ENCODE measurements at regions of chr3 and their contacts with region 1.

Region 1: DNA sequence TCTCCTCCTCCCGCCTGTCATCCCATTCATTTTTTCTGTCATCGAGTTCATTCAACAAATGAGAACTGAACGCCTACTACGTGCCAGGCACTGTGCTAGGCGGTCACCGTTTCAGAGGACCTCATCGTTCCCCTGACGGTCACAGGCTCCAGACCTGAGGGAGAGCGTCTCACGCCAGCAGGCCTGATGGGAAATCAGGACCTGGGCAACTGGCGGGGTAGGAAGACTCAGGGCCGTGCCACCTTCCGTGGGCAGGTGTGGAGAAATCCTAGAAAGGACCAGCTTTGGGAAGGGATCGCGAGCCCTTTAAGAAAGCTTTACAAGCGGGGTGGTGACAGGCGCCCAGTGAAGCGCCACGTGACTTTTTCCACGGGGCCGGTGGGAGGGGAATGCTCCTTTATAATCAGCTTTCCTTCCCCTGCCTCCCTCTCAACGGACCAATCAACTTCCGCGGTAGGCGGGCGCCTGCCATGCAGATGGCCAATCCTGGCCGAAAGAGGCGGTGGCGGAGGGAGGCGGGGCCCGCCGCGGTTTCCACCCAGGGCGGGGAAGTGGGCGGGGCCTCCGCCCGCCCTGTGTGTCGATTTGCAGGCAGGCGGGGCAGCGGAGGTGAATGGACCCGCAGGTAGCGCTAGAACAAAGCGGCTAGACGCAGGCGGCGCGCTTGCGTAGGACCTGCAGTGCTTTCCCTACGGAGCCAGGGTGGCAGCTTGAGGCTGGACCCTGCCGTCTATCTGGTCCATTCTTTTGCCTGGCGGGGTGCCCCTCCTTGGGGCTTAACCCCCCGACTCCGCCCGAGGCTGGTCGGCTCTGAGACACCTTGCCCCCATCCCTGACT is 816 bp upstream of the DUSP7 start:
- DNase-seq: peak; percentile 100
- H3K4me3 ChIP-seq: peak overlapping the region; percentile 66 to 88 (median 80)
- H3K27ac ChIP-seq: peak overlapping the region; percentile 88 to 92 (median 91)
- H3K4me1 ChIP-seq: peaks cover 36 to 51% (median 51%) of the 10 kb centered on the region in 4 donors
- H3K27me3 ChIP-seq: no peaks in the 10 kb centered on the region
- CTCF ChIP-seq: peak in 2 of 3 experiments; percentile 13 to 23
- EP300 ChIP-seq: no peak
- POLR2A ChIP-seq: no peak

Region 2: GRCh38 chr3:51434746-51435327 is 622.4 kb before region 1 on chr3:
- intact Hi-C with region 1: no loop called
- DNase-seq: no peak
- H3K4me3 ChIP-seq: no peak overlapping the region
- H3K27ac ChIP-seq: no peak overlapping the region
- H3K4me1 ChIP-seq: no peaks in the 10 kb centered on the region
- H3K27me3 ChIP-seq: no peaks in the 10 kb centered on the region
- CTCF ChIP-seq: peak; percentile 43 to 69 (median 60)
- EP300 ChIP-seq: no peak
- POLR2A ChIP-seq: no peak

Region 3: DNA sequence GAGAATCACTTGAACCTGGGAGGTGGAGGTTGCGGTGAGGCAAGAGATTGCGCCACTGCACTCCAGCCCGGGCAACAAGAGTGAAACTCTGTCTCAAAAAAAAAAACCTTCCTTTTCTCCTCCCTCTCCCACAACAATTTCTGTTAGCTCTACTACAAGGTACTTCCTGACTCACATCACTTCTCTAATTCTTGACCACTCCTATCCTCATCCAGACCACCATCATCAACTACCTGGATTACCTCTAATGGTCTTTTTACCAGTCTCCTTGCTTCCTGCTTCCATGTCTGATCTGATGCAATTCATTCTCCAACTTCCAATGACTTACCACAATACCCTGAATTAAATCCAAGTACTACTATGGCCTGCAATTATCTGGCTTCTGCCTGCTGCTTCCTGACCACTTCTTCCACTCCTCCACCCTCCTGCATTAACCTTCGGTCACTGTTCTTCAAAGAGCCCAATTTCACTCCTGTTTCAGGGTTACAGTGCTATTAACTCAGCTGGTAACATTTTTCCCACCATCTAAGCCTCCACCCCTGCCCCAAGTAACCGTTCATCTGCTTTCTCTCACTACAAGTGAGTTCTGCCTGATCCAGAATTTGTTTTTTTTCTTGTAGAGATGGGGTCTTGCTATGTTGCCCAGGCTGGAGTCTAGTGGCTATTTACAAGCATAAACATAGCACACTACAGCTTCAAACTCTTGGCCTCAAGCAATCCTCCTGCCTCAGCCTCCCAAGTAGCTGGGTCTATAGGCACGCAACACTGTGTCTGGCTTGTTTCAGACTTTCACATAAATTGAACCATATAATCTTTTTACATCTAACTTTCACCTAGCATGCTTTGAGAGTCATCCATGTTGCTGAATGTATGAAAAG is 585.2 kb before region 1 on chr3:
- intact Hi-C with region 1: no loop called
- DNase-seq: no peak
- H3K4me3 ChIP-seq: no peak overlapping the region
- H3K27ac ChIP-seq: no peak overlapping the region
- H3K4me1 ChIP-seq: no peaks in the 10 kb centered on the region
- H3K27me3 ChIP-seq: no peaks in the 10 kb centered on the region
- CTCF ChIP-seq: no peak
- EP300 ChIP-seq: no peak
- POLR2A ChIP-seq: no peak

Region 4: DNA sequence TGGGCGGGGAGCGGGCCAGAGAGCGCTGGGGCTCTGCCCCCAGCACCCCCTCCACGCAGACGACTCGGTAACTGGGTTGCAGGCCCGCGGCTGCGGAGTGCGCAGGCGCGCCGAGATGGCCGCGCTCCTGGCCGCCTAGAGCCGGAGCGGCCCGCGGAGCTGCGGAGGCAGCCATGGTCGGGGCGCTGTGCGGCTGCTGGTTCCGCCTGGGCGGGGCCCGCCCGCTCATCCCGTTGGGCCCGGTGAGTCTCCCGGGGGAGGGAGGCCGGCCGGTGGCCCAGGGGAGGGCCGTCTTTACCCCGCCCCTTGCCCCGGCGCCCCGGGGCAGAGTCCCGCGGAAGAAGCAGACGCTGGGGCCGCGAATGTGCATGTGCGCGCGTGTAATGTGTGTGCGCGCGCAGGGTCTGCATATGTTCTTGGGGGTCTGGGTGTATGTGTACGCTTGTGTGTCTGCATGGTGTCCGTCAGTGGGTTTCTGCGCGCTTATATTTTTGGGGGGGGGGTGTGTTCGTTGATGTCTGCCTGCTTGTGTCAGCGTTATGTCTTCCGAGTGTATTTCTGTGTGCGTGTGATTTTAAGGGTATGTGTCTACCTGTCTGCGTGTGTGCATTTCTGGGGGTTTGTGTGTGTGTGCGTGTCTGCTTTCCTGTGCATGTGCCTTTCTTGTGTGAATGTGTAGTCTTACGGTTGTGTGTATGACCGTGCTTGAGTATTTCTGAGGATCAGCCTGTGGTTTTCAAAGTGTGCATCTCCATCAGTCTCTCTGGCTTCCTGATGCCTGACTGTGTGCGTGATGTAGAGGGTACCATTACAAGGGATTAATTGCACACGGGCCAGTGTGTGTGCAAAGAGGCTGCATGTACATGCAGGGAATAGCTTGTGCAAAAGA is 82.0 kb before region 1 on chr3 and contains the start of gene ABHD14A:
- intact Hi-C with region 1: no loop called
- DNase-seq: no peak
- H3K4me3 ChIP-seq: peak within 1 kb of the TSS; percentile 55 to 75 (median 70)
- H3K27ac ChIP-seq: peak within 1 kb of the TSS; percentile 93 to 96 (median 96)
- H3K4me1 ChIP-seq: peaks cover 27 to 54% (median 35%) of the 10 kb centered on the region in 4 donors
- H3K27me3 ChIP-seq: no peaks in the 10 kb centered on the region
- CTCF ChIP-seq: no peak
- EP300 ChIP-seq: no peak
- POLR2A ChIP-seq: no peak
- total RNA-seq, gene ABHD14A: 10.0 to 22.3 (median 15.8) TPM

Region 5: DNA sequence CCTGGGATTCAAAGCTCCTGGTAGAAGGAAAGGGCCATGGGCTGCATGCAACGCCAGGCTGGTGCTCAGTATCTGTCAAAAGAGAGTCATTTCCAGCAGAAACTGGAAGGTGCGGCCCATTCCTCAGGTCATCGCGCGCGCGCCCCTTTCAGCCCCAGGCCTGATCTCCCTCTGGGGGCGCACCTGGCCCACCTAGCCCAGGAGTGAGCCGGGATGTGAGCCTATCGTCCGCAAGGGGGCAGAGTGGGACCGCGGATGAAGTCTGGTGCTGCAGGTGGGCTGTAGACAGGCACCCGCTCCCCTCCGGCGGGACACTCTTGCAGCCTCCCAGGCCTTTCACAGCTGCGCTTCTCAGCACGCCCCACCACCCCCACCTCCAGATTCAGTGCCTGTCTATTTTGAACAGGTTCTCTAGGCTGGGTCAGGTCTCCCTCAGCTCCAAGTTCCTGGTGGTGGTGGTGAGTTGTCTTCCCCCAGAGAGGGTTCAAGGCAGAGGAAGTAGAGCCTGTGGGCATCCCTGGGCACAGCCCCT is 55.7 kb before region 1 on chr3:
- intact Hi-C with region 1: loop called (anchors 2 kb)
- DNase-seq: peak; percentile 95
- H3K4me3 ChIP-seq: no peak overlapping the region
- H3K27ac ChIP-seq: no peak overlapping the region
- H3K4me1 ChIP-seq: peaks cover 23 to 32% (median 31%) of the 10 kb centered on the region in 4 donors
- H3K27me3 ChIP-seq: peaks cover 0 to 31% (median 0%) of the 10 kb centered on the region in 4 donors
- CTCF ChIP-seq: peak; percentile 85 to 94 (median 93)
- EP300 ChIP-seq: no peak
- POLR2A ChIP-seq: no peak

Region 6: GRCh38 chr3:52014613-52015012 is 42.6 kb before region 1 on chr3:
- intact Hi-C with region 1: loop called (anchors 5 kb)
- DNase-seq: no peak
- H3K4me3 ChIP-seq: no peak overlapping the region
- H3K27ac ChIP-seq: no peak overlapping the region
- H3K4me1 ChIP-seq: peaks cover 7 to 37% (median 16%) of the 10 kb centered on the region in 4 donors
- H3K27me3 ChIP-seq: no peaks in the 10 kb centered on the region
- CTCF ChIP-seq: peak in 1 of 3 experiments; percentile 14
- EP300 ChIP-seq: no peak
- POLR2A ChIP-seq: no peak

Region 7: GRCh38 chr3:52123106-52123725 is 66.0 kb after region 1 on chr3:
- intact Hi-C with region 1: loop called (anchors 5 kb)
- DNase-seq: no peak
- H3K4me3 ChIP-seq: no peak overlapping the region
- H3K27ac ChIP-seq: peak overlapping the region in 3 of 4 donors; percentile 47 to 57 (median 54)
- H3K4me1 ChIP-seq: peaks cover 24 to 40% (median 32%) of the 10 kb centered on the region in 4 donors
- H3K27me3 ChIP-seq: no peaks in the 10 kb centered on the region
- CTCF ChIP-seq: peak in 2 of 3 experiments; percentile 88 to 93
- EP300 ChIP-seq: no peak
- POLR2A ChIP-seq: no peak

Region 8: GRCh38 chr3:52144034-52144795 is 87.0 kb after region 1 on chr3:
- intact Hi-C with region 1: loop called (anchors 5 kb)
- DNase-seq: peak; percentile 96
- H3K4me3 ChIP-seq: no peak overlapping the region
- H3K27ac ChIP-seq: no peak overlapping the region
- H3K4me1 ChIP-seq: peaks cover 3 to 5% (median 4%) of the 10 kb centered on the region in 4 donors
- H3K27me3 ChIP-seq: no peaks in the 10 kb centered on the region
- CTCF ChIP-seq: peak; percentile 94 to 99 (median 97)
- EP300 ChIP-seq: no peak
- POLR2A ChIP-seq: no peak

Region 9: DNA sequence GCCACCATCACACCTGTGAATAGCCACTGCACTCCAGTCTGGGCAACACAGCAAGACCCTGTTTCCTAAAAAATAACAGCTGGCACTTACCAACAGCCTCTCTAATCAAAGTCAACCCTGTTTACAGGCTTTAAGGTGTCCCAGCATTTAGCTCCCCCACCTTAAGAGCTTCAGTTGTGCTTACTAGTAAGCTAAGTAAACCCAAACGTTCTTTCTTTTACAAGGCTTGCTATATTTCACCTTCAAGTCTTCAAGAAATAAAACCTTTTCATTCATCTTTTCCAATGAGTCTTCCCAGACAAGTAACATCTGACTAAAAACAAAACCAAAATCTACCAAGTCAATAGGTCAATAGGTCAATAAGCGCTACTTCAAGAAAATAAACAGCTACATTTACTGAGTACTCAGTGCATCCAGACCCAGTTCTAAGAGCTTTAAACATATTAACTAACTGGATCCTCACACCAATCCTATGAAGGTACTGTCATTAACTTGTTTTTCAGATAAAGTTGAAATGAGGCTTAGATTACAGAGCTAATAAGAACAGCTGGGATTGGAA is 566.1 kb after region 1 on chr3:
- intact Hi-C with region 1: no loop called
- DNase-seq: no peak
- H3K4me3 ChIP-seq: no peak overlapping the region
- H3K27ac ChIP-seq: no peak overlapping the region
- H3K4me1 ChIP-seq: no peaks in the 10 kb centered on the region
- H3K27me3 ChIP-seq: no peaks in the 10 kb centered on the region
- CTCF ChIP-seq: no peak
- EP300 ChIP-seq: no peak
- POLR2A ChIP-seq: no peak

Measured in esophagus muscularis mucosa (tissue), 4 donors.